ENCODE measurements at regions of chr13 and their contacts with region 1.

Region 1: DNA sequence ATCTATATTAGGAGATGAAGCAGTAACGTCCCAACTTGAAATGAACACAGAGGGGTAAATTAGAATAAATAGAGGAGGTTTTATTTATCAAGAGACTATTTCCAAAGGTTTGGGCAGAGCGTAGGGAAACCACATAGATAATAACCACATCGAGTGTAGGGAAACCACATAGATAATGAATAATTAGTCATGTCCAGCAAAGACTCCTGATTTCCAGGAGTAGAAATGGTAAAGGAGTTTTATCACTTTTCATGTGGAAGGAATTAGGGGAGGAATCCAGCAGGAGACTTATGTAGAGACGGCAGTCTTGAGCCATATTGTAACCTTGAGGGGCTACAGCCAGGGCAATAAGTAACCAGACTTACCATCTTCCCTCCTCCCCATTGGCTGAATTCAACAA is 136.3 kb upstream of the CSNK1A1L start:
- DNase-seq: no peak
- ATAC-seq: no peak
- H3K4me3 ChIP-seq: no peak overlapping the region
- H3K27ac ChIP-seq: no peak overlapping the region
- H3K4me1 ChIP-seq: no peaks in the 10 kb centered on the region
- H3K27me3 ChIP-seq: no peaks in the 10 kb centered on the region
- CTCF ChIP-seq: no peak

Region 2: DNA sequence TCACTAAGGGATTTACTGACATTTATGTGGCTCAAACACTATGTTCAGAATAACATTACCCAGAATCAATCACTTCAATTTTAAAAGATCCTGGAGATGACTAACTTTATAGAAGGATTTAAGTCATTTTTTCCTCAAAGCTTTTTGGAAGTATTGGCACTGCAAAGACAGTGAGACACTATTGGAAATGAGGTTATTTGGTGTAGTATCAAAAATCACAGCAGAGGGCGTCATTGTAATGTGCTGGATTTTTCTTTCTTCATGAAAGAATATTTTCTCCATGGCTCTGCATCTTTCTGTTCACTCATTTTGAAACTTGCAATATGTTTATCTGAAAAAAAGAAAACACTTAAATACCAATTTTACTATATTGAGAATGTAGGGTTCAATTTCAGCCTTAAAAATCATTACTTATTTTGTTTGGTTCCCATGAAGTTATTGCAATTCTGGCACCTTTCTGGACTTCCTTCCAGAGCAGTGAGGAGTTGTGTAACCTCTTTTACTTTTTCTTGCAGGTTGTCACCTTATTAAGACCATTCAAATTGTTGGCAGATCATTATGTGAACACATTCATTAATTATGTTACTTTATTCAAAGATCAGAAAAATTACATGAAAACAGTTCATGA is 132.6 kb before region 1 on chr13:
- intact Hi-C with region 1: no loop called
- DNase-seq: peak in 1 of 2 donors; percentile 23
- ATAC-seq: peak in 7 of 8 donors; percentile 42 to 68 (median 59)
- H3K4me3 ChIP-seq: no peak overlapping the region
- H3K27ac ChIP-seq: no peak overlapping the region
- H3K4me1 ChIP-seq: peaks cover 0 to 10% (median 0%) of the 10 kb centered on the region in 9 donors
- H3K27me3 ChIP-seq: no peaks in the 10 kb centered on the region
- CTCF ChIP-seq: peak; percentile 52 to 84 (median 72)

Region 3: GRCh38 chr13:37158481-37158880 is 83.3 kb before region 1 on chr13:
- intact Hi-C with region 1: loop called in 1 of 10 experiments (anchors 5 kb)
- DNase-seq: no peak
- ATAC-seq: no peak
- H3K4me3 ChIP-seq: no peak overlapping the region
- H3K27ac ChIP-seq: no peak overlapping the region
- H3K4me1 ChIP-seq: no peaks in the 10 kb centered on the region
- H3K27me3 ChIP-seq: no peaks in the 10 kb centered on the region
- CTCF ChIP-seq: no peak

Measured in heart right ventricle (tissue), 16 donors.